OCI-LY7 (cell line): ENCODE measurements at regions of chr1 and their contacts with region 1.

Region 1: GRCh38 chr1:183471743-183472487 is 384 bp upstream of the SMG7 start:
- DNase-seq: peak; percentile 94
- H3K4me3 ChIP-seq: peak overlapping the region; percentile 95
- H3K27ac ChIP-seq: peak overlapping the region; percentile 88
- H3K4me1 ChIP-seq: peaks cover 44% of the 10 kb centered on the region
- CTCF ChIP-seq: no peak

Region 2: DNA sequence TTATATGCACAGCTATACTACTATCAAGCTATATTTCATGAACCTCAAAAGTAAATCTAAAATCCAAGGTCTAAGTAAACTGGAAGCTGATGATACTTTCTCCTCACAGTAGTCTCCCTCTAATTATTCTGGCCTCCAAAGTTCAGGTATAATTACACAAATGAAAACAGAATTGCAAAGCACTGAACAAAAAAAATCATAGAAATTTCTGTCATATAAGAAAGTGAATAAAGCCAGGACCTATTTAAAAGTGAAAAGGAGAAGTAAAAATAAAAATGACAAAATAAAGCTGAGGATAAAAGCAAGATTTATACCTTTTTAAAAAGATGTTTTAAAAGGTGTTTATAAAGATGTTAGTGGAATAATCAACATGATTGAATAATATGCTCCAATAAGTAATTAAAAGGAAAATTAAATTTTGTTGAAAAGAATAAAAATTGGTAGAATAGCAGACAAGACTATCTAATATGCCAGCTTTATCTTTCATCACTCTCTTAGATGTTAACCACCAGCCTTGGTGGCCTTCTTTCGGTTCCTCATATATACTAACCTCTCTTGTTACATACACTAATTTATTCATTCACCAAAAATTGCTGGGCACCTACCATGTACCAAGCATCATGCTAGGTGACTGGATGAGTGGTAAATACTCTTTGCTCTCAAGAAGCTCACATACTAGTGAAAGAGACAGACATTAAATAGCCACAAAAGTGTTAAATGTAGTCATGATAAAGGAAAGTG is 544.1 kb before region 1 on chr1:
- CTCF ChIA-PET with region 1: no interaction called
- POLR2A ChIA-PET with region 1: interaction called, 3 read pairs
- intact Hi-C with region 1: loop called (anchors 5 kb)
- DNase-seq: peak; percentile 77
- H3K4me3 ChIP-seq: peak overlapping the region; percentile 59
- H3K27ac ChIP-seq: peak overlapping the region; percentile 84
- H3K4me1 ChIP-seq: peaks cover 32% of the 10 kb centered on the region
- CTCF ChIP-seq: no peak

Region 3: DNA sequence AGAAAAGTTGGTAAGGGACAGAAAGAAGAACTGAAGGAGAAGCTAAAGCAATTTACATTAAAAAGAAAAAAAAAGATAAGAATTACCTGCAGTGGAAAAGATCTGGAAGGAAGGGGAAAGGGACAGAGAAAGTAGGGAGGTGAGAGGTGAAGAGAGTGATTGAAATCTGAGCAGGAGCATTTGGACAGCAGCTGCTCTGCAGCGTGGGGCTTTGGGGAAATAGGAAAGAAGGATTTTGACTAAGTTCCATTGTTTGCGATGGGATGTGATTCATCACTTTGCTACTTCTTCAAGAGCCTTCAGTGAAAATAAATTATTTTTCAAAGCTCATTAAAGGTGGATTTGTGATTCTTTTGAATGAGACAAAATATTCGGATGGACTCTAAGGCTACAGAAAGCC is 27.7 kb before region 1 on chr1:
- CTCF ChIA-PET with region 1: no interaction called
- POLR2A ChIA-PET with region 1: no interaction called
- intact Hi-C with region 1: no loop called
- DNase-seq: no peak
- H3K4me3 ChIP-seq: no peak overlapping the region
- H3K27ac ChIP-seq: no peak overlapping the region
- H3K4me1 ChIP-seq: no peaks in the 10 kb centered on the region
- CTCF ChIP-seq: no peak

Region 4: DNA sequence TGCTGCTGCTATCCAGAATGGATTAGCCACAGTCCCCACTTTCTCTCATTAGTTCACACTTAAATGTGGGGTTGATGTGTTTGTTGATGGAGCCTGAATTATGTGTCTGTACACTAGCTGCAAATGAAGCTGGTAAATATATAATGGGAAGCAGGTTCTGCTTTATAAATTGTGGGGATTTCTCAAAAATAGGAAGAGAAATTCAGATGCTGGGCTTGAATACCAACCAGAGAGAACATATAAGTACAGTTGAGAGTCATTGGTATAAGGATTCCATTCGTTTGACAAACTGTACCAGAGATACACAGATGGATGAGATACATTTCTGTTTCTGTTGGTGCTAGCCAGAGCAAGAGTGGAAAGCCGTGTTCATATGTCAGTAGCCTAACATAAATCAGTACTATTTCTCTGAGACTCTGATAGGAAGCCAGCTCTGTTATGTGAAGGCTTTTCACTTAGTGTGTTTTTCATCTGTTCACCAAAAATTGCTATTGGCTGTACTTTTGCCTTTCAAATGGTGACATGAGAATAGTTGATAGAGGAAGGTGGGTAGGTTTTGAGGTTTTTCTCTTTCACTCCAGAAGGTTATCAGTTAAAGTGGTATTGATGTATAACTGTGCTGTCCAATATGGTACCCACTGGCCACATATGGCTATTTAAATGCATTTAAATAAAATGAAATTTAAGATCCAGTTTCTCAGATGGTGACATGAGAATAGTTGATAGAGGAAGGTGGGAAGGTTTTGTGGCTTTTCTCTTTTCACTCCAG is 15.9 kb after region 1 on chr1:
- CTCF ChIA-PET with region 1: interaction called, 4 read pairs
- POLR2A ChIA-PET with region 1: interaction called, 14 read pairs
- intact Hi-C with region 1: no loop called
- DNase-seq: no peak
- H3K4me3 ChIP-seq: no peak overlapping the region
- H3K27ac ChIP-seq: peak overlapping the region; percentile 31
- H3K4me1 ChIP-seq: peaks cover 92% of the 10 kb centered on the region
- CTCF ChIP-seq: no peak

Region 5: GRCh38 chr1:183533617-183534174 is 61.8 kb after region 1 on chr1:
- CTCF ChIA-PET with region 1: interaction called, 3 read pairs
- POLR2A ChIA-PET with region 1: interaction called, 4 read pairs
- intact Hi-C with region 1: loop called (anchors 2 kb)
- DNase-seq: no peak
- H3K4me3 ChIP-seq: no peak overlapping the region
- H3K27ac ChIP-seq: no peak overlapping the region
- H3K4me1 ChIP-seq: peaks cover 7% of the 10 kb centered on the region
- CTCF ChIP-seq: no peak

Region 6: DNA sequence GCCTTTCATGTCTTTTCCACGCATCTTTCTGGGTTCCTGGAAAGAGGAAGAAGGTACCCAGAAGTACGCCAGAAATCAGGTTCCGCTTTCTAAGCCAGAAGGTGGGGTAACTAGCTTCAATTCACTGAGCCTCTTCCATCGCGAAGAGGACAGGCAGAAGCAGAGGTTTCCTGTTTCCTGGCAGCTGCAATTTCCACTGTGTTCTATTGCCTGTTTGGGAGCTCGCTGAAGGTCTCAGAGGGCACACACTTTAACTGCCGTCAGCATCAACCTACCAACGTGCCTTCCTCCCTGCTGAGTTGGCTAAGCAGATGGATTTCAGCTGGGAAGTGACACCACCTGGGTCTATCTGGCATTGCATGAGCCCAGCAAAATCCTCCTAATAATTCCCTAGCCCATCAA is 108.4 kb after region 1 on chr1:
- CTCF ChIA-PET with region 1: no interaction called
- POLR2A ChIA-PET with region 1: interaction called, 10 read pairs
- intact Hi-C with region 1: loop called (anchors 2 kb)
- DNase-seq: peak; percentile 38
- H3K4me3 ChIP-seq: no peak overlapping the region
- H3K27ac ChIP-seq: no peak overlapping the region
- H3K4me1 ChIP-seq: peaks cover 37% of the 10 kb centered on the region
- CTCF ChIP-seq: peak; percentile 56

Region 7: GRCh38 chr1:183622884-183623785 is 151.2 kb after region 1 on chr1:
- CTCF ChIA-PET with region 1: no interaction called
- POLR2A ChIA-PET with region 1: no interaction called
- intact Hi-C with region 1: loop called (anchors 1 kb)
- DNase-seq: peak; percentile 82
- H3K4me3 ChIP-seq: no peak overlapping the region
- H3K27ac ChIP-seq: no peak overlapping the region
- H3K4me1 ChIP-seq: peaks cover 24% of the 10 kb centered on the region
- CTCF ChIP-seq: peak; percentile 97

Region 8: GRCh38 chr1:183676586-183677189 is 204.8 kb after region 1 on chr1:
- CTCF ChIA-PET with region 1: no interaction called
- POLR2A ChIA-PET with region 1: no interaction called
- intact Hi-C with region 1: no loop called
- DNase-seq: no peak
- H3K4me3 ChIP-seq: no peak overlapping the region
- H3K27ac ChIP-seq: no peak overlapping the region
- H3K4me1 ChIP-seq: no peaks in the 10 kb centered on the region
- CTCF ChIP-seq: no peak

Region 9: GRCh38 chr1:184051485-184052193 is 579.7 kb after region 1 on chr1 and contains the start of gene TSEN15:
- CTCF ChIA-PET with region 1: no interaction called
- POLR2A ChIA-PET with region 1: no interaction called
- intact Hi-C with region 1: loop called (anchors 5 kb)
- DNase-seq: peak; percentile 94
- H3K4me3 ChIP-seq: peak within 1 kb of the TSS; percentile 73
- H3K27ac ChIP-seq: peak within 1 kb of the TSS; percentile 80
- H3K4me1 ChIP-seq: peaks cover 15% of the 10 kb centered on the region
- CTCF ChIP-seq: no peak; the same call in 1 of the 2 replicates
- total RNA-seq, gene TSEN15: 39.8 and 42.5 TPM in 2 replicates